ENCODE measurements at regions of chr20 and their contacts with region 1.

Region 1: GRCh38 chr20:32959351-32960221 is 44.6 kb downstream of the SUN5 start:
- DNase-seq: peak; percentile 4 to 85
- H3K4me3 ChIP-seq: no peak overlapping the region
- CTCF ChIP-seq: no peak
- POLR2A ChIP-seq: no peak

Region 2: GRCh38 chr20:32941155-32941885 is 18.3 kb before region 1 on chr20:
- intact Hi-C with region 1: loop called (anchors 1 kb)
- DNase-seq: no peak
- H3K4me3 ChIP-seq: no peak overlapping the region
- CTCF ChIP-seq: no peak
- POLR2A ChIP-seq: no peak